ENCODE measurements at regions of chr3 and their contacts with region 1.

Region 1: GRCh38 chr3:69324362-69325025 is 61.4 kb downstream of the FRMD4B start:
- DNase-seq: no peak
- H3K4me3 Mint-ChIP-seq: no peak overlapping the region
- H3K27ac Mint-ChIP-seq: peak overlapping the region; percentile 72
- H3K4me1 Mint-ChIP-seq: peaks cover 52% of the 10 kb centered on the region
- H3K27me3 Mint-ChIP-seq: no peaks in the 10 kb centered on the region

Region 2: DNA sequence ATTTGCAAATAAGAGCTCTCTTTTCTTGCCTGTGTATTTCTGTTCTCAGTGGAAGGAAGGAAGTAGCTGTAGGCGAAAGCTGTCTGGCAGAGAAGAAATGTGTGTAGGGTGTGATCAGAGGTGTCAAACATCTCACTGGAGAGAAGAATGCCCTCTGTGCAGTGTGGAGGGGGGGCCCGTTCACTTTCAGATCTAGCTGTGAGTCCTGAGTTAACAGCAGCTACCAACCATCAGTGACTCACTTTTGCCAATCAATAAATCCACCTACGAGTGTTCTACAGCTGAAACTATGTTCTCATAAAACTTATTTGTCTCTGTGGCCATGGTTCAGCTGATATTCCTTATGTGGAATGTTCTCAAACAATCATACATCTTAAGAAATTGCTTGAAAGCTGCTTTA is 42.3 kb before region 1 on chr3:
- intact Hi-C with region 1: loop called (anchors 1 kb)
- DNase-seq: no peak
- H3K4me3 Mint-ChIP-seq: peak overlapping the region; percentile 37
- H3K27ac Mint-ChIP-seq: peak overlapping the region; percentile 81
- H3K4me1 Mint-ChIP-seq: peaks cover 24% of the 10 kb centered on the region
- H3K27me3 Mint-ChIP-seq: no peaks in the 10 kb centered on the region

Region 3: DNA sequence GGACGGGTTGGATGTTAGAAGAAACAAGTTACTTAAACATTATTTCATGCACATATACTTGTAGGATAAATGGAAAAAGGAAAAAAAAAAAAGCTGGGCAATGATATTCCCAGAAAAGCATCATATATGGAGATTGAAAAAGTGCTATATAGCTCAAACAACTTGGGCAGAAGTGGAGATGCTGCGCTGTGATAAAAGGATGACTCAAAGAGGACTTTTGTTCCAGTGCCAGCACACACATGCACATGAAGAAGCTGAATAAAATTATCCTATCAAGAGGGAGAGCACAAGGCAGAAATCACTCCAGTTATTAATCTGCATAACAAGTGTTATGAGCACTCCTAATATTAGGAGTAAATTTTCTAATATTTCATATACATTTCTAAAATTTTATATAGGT is 30.5 kb after region 1 on chr3:
- intact Hi-C with region 1: loop called (anchors 2 kb)
- DNase-seq: no peak
- H3K4me3 Mint-ChIP-seq: no peak overlapping the region
- H3K27ac Mint-ChIP-seq: no peak overlapping the region
- H3K4me1 Mint-ChIP-seq: peaks cover 23% of the 10 kb centered on the region
- H3K27me3 Mint-ChIP-seq: peaks cover 22% of the 10 kb centered on the region

Region 4: DNA sequence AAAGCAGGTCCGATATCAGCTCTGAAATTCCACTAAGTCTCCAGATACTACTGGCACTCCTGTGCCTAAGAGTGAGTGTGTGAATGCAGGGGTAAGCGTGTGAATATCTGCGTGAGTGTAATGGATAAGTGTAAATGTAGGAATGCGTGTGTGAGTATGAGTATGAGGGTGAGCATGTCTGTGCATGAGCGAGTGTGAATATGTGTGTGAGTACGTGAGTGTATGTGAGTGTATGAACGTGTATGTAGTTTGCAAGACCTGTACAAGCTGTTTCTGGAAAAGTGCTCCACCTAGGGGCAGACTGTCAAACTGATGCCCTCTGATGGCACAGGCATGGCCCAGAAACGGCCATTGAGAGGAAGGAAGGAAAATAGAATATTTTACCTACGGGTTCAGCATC is 85.8 kb after region 1 on chr3:
- intact Hi-C with region 1: loop called (anchors 1 kb)
- DNase-seq: peak; percentile 49
- H3K4me3 Mint-ChIP-seq: no peak overlapping the region
- H3K27ac Mint-ChIP-seq: no peak overlapping the region
- H3K4me1 Mint-ChIP-seq: peaks cover 10% of the 10 kb centered on the region
- H3K27me3 Mint-ChIP-seq: peaks cover 13% of the 10 kb centered on the region

Region 5: GRCh38 chr3:69671082-69671952 is 346.8 kb after region 1 on chr3:
- intact Hi-C with region 1: loop called (anchors 5 kb)
- DNase-seq: no peak
- H3K4me3 Mint-ChIP-seq: no peak overlapping the region
- H3K27ac Mint-ChIP-seq: no peak overlapping the region
- H3K4me1 Mint-ChIP-seq: no peaks in the 10 kb centered on the region
- H3K27me3 Mint-ChIP-seq: no peaks in the 10 kb centered on the region